Motor neuron (in vitro differentiated cells): ENCODE measurements at regions of chr11 and their contacts with region 1.

Region 1: DNA sequence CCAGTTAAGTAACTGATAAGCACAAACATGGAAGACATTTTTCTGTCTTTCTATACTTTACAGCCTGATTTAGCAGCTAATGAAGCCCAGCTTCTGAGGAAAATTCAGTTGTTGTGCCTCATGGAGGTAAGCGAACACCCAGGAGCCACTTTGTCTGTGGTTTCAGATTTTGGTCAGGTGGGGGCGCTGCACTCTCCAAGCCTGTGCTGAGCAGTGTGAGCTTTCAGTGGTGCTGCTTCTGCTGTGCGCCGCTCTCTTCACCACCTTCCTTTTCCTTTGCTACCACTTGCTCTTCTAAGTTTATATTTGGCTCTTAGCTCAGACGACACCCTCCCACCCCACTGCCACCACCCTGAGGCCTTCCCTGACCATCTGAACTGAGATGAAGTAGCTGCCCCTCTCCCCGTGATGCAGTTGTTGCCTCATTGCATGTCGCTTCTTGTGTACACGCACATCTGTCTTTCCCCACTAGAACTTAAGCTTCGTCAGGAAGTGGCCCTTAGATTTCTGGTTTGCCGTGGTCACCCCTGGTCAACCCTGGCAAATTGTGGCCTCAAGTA is 14.0 kb downstream of the PSMD13 start:
- ATAC-seq: peak; percentile 52 to 98 (median 78)
- H3K4me3 ChIP-seq: no peak overlapping the region
- H3K27ac ChIP-seq: no peak overlapping the region
- H3K4me1 ChIP-seq: no peaks in the 10 kb centered on the region

Region 2: DNA sequence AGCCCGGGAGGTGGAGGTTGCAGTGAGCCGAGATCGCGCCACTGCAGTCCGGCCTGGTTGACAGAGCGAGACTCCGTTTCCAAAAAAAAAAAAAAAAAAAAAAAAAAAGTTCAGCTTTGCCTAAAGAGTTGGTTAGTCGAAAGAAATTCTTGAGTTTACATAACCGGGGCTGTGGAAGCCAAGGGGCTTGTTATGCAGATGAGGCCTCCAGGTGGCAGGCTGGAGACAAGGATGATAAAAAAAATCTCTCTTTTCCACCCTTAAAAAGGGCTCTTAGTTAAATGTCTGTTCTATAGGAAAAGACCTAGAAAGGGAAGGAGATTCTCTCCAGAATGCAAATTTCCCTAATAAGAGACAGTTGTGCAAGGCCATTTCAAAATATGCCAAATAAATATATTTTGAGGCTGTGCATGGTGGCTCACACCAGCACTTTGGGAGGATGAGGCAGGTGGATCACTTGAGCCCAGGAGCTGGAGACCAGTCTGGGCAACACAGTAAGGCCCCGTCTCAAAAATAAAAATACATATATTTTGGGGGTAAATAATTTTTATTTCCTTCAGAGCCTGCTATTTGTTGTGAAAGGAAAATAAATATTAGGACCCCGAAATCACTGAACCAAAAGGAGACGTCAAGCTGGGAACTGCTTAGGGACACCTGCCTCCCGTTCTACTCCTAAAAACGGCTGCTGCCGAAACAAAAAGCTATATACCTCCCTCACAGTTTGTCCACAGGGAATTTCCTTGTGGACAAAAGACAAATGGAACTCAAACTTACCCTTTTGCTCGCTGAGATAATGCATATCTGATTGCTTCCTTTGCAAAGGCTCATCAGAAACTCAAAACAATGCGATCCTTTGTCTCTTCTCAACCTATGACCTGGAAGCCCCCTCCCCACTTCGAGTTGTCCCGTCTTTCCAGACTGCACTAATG is 54.4 kb after region 1 on chr11:
- in situ Hi-C with region 1: no loop called
- ATAC-seq: peak in 5 of 8 experiments; percentile 54 to 69 (median 55)
- H3K4me3 ChIP-seq: no peak overlapping the region
- H3K27ac ChIP-seq: no peak overlapping the region
- H3K4me1 ChIP-seq: peaks cover 21 to 25% of the 10 kb centered on the region in 2 donors

Region 3: DNA sequence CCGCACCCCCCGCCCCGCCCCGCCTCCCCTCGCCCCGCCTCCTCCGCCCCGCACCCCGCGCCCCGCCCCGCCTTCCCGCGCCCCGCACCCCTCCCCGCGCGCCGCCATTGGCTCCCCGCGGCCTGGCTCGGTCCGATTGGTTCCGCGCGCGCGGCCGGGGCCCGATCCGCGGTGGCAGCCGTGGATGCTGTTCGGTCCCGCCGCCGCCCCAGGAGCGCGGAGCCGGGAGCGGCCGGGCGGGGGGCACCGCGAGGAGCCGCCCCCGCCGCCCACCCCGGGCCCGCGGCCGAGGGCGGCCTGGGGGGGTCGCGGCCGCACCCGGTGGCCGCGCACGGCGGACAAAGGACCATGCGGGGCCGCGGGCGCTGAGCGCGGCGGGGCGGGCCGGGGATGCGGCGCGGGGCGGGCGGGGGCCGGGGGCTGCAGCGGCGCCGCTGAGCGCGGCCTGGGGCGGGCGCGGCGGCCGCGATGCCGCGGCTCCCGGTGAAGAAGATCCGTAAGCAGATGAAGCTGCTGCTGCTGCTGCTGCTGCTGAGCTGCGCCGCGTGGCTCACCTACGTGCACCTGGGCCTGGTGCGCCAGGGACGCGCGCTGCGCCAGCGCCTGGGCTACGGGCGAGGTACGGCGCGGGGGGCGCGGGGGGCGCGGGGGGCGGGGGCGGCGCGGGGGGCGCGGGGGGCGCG is 118.7 kb after region 1 on chr11 and contains the start of gene B4GALNT4:
- in situ Hi-C with region 1: loop called in 1 of 9 experiments (anchors 5 kb)
- ATAC-seq: peak; percentile 34 to 75 (median 66)
- H3K4me3 ChIP-seq: peak within 1 kb of the TSS; percentile 76 to 100 (median 78)
- H3K27ac ChIP-seq: peak within 1 kb of the TSS; percentile 93 to 95
- H3K4me1 ChIP-seq: peaks cover 10 to 16% of the 10 kb centered on the region in 2 donors
- total RNA-seq, gene B4GALNT4: 9.7 to 103 (median 70.9) TPM